HCT116 (cell line): ENCODE measurements at regions of chr6 and their contacts with region 1.

Region 1: DNA sequence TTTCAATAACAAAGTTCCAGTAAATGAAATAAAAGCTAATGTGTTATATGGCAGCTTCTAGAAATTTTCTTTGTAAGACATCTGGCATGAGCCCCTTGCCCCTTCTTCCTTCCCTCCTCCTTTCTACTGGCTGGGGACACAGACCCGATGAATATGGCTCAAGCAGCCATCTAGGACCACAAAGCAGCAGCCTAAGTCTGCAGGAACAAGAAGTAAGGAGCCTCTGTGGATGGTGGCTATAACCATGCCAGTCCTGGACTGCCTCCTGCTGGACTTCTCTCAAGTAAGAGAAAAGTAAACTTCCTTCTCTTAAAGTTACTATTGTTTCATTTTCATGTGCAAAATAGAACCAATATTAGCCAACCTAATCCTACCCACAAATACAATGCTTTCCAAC is 114.9 kb upstream of the DST start:
- DNase-seq: no peak
- ATAC-seq: peak; percentile 63
- H3K4me3 ChIP-seq: no peak overlapping the region
- H3K27ac ChIP-seq: peak overlapping the region; percentile 97
- H3K4me1 ChIP-seq: peaks cover 79 to 80% of the 10 kb centered on the region in 2 experiments
- H3K27me3 ChIP-seq: no peaks in the 10 kb centered on the region
- CTCF ChIP-seq: peak; percentile 57 to 79 (median 61)
- POLR2A ChIP-seq: no peak
- RAD21 ChIP-seq: peak; percentile 83

Region 2: GRCh38 chr6:56359201-56359899 is 398.2 kb before region 1 on chr6:
- CTCF ChIA-PET with region 1: no interaction called
- POLR2A ChIA-PET with region 1: no interaction called
- RAD21 ChIA-PET with region 1: no interaction called
- intact Hi-C with region 1: loop called (anchors 5 kb)
- DNase-seq: peak; percentile 72
- ATAC-seq: peak; percentile 95
- H3K4me3 ChIP-seq: no peak overlapping the region
- H3K27ac ChIP-seq: no peak overlapping the region
- H3K4me1 ChIP-seq: no peaks in the 10 kb centered on the region
- H3K27me3 ChIP-seq: no peaks in the 10 kb centered on the region
- CTCF ChIP-seq: peak; percentile 70 to 81 (median 79); a peak in 5 of 6 replicates
- POLR2A ChIP-seq: no peak
- RAD21 ChIP-seq: peak; percentile 94

Region 3: DNA sequence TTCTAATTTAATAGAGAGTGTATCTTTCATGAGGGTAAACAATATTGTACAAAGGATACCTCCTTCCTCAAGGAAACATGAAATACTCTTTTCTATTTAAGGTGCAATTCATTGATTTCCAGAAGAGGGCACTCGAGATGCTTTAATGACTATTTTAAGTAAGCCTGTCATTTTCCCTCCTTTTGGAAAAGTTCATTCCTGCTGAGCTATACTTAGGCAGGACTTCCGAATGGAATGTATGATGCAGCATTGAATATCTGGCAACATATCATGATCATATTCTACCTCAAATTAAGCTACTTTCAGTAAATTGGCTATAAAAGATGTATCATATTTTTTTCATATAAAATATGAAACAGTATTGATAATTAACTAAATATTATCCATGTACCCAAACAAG is 119.9 kb before region 1 on chr6:
- CTCF ChIA-PET with region 1: interaction called, 20 read pairs
- POLR2A ChIA-PET with region 1: no interaction called
- RAD21 ChIA-PET with region 1: no interaction called
- intact Hi-C with region 1: loop called (anchors 1 kb)
- DNase-seq: peak; percentile 49
- ATAC-seq: peak; percentile 70
- H3K4me3 ChIP-seq: no peak overlapping the region
- H3K27ac ChIP-seq: no peak overlapping the region; the same call in 1 of the 2 replicates
- H3K4me1 ChIP-seq: peaks cover 4% of the 10 kb centered on the region in 2 experiments
- H3K27me3 ChIP-seq: no peaks in the 10 kb centered on the region
- CTCF ChIP-seq: peak; percentile 28 to 69 (median 60); a peak in 4 of 6 replicates
- POLR2A ChIP-seq: no peak
- RAD21 ChIP-seq: peak; percentile 80

Region 4: DNA sequence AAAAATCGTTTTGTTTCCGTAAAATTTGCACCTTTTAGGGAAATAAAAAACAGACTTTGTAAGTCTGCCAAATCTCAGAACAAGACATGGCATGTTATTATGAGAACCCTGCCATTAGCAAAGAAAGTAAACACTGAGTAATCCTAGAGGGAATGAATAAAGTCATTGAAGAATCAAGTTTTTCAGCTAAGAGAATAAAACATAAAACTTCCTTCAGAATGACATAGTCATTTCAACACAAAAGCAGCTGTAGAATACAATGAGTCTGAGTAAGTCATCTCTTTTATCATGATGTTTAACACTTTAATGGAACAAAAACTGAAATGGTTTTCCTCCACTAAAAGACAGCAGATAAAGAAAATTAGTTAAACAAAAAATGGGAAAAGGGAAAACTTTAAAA is 104.6 kb before region 1 on chr6:
- CTCF ChIA-PET with region 1: no interaction called
- POLR2A ChIA-PET with region 1: no interaction called
- RAD21 ChIA-PET with region 1: no interaction called
- intact Hi-C with region 1: loop called (anchors 5 kb)
- DNase-seq: peak; percentile 61
- ATAC-seq: peak; percentile 73
- H3K4me3 ChIP-seq: no peak overlapping the region
- H3K27ac ChIP-seq: peak overlapping the region; percentile 86
- H3K4me1 ChIP-seq: peaks cover 60 to 80% of the 10 kb centered on the region in 2 experiments
- H3K27me3 ChIP-seq: no peaks in the 10 kb centered on the region
- CTCF ChIP-seq: no peak
- POLR2A ChIP-seq: no peak
- RAD21 ChIP-seq: no peak; the same call in 1 of the 2 replicates

Region 5: DNA sequence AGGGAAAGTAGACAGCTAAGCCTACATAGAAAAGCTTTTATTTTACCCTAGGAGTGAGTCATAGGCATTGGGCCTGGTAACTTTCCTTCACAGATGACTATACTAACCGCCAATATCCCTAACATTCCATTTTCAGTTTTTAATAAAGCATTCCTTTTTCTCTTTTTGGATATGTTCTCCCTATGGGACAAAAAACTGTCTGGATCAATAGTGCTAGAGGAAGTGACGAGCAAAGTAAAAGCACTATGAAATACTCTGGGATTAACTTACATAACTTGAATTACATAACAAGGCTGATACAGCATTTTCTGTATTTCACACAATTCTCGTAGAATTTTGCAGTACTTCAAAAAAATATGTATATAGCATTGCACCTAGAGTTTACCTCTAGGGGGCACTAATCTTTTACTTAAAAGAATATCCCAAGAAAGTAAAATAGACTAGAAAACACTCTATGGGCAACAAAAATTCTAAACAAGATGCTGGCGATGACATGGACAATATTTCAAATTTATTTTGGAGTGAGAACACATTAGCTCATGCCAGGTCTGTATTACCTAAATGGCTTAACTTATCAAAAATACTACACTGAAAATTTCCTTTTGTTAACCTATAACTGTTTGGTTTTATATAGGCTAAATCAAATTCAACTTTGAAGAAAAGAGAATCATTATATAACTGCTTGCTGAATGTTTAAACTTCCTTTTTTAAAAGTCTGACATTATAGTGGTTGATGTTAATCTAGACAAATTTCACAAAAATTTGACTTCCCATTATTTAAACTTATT is 48.6 kb before region 1 on chr6:
- CTCF ChIA-PET with region 1: interaction called, 29 read pairs
- POLR2A ChIA-PET with region 1: no interaction called
- RAD21 ChIA-PET with region 1: interaction called, 3 to 6 read pairs
- intact Hi-C with region 1: loop called (anchors 2 kb)
- DNase-seq: peak; percentile 66
- ATAC-seq: no peak
- H3K4me3 ChIP-seq: no peak overlapping the region; a peak in 1 of 4 replicates
- H3K27ac ChIP-seq: peak overlapping the region; percentile 74
- H3K4me1 ChIP-seq: peaks cover 54 to 83% of the 10 kb centered on the region in 2 experiments
- H3K27me3 ChIP-seq: no peaks in the 10 kb centered on the region
- CTCF ChIP-seq: peak; percentile 43 to 67 (median 64); a peak in 5 of 6 replicates
- POLR2A ChIP-seq: no peak
- RAD21 ChIP-seq: peak; percentile 71

Region 6: GRCh38 chr6:56843573-56844349 is 86.2 kb after region 1 on chr6:
- CTCF ChIA-PET with region 1: interaction called, 3 read pairs
- POLR2A ChIA-PET with region 1: no interaction called
- RAD21 ChIA-PET with region 1: interaction called in 1 of 2 experiments, 3 read pairs
- intact Hi-C with region 1: loop called (anchors 5 kb)
- DNase-seq: peak; percentile 78
- ATAC-seq: peak; percentile 91
- H3K4me3 ChIP-seq: peak overlapping the region; percentile 87 to 91
- H3K27ac ChIP-seq: peak overlapping the region; percentile 97
- H3K4me1 ChIP-seq: peaks cover 28 to 53% of the 10 kb centered on the region in 2 experiments
- H3K27me3 ChIP-seq: no peaks in the 10 kb centered on the region
- CTCF ChIP-seq: peak in 2 of 3 experiments; percentile 43 to 72; a peak in 3 of 6 replicates
- POLR2A ChIP-seq: no peak
- RAD21 ChIP-seq: peak; percentile 52